ENCODE measurements at regions of chr17 and their contacts with region 1.

Region 1: GRCh38 chr17:55527540-55528118 is 16.4 kb upstream of the SMIM36 start:
- DNase-seq: peak; percentile 50 to 71
- ATAC-seq: peak; percentile 84 to 86
- H3K4me3 ChIP-seq: no peak overlapping the region
- H3K27ac ChIP-seq: no peak overlapping the region; a peak in 1 of 6 replicates
- H3K4me1 ChIP-seq: no peaks in the 10 kb centered on the region
- CTCF ChIP-seq: peak; percentile 96
- EP300 ChIP-seq: no peak
- POLR2A ChIP-seq: no peak
- RAD21 ChIP-seq: peak; percentile 94 to 99

Region 2: GRCh38 chr17:55540414-55541091 is 12.9 kb after region 1 on chr17:
- CTCF ChIA-PET with region 1: interaction called, 34 read pairs
- POLR2A ChIA-PET with region 1: no interaction called
- DNase-seq: peak; percentile 38 to 90
- ATAC-seq: peak; percentile 73 to 92; a peak in 5 of 6 replicates
- H3K4me3 ChIP-seq: no peak overlapping the region
- H3K27ac ChIP-seq: peak overlapping the region; percentile 59 to 74; a peak in 5 of 6 replicates
- H3K4me1 ChIP-seq: peaks cover 18% of the 10 kb centered on the region
- CTCF ChIP-seq: no peak
- EP300 ChIP-seq: peak; percentile 70 to 71; a peak in 3 of 5 replicates
- POLR2A ChIP-seq: no peak
- RAD21 ChIP-seq: peak in 1 of 2 experiments; percentile 32; a peak in 1 of 5 replicates

Region 3: DNA sequence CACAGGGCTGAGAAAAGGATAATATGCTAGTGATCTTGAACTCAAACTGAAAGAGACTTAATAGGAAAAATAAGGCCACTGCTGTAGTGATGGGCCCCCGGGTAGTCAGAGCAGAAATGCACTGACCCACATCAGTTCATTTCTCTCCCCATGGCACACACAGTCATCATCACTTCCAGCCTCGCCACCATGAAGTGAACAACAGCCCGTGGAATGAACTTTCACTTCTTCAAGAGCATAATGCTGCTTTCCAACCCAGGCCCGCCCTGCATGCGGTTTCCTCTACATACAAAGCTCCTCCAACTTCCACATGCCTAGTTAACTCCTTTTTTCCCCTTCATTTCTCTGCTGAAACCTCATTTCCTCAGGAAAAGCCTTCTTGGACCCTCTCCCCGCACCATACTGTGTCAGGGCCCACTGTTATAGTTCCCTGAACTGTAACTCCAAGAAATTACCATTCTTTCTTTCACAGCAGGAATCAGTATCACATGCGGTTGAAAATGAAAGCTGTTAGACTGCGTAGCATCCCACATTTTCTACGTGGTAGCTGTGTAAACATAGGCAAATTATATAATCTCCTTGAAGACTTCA is 49.5 kb after region 1 on chr17:
- CTCF ChIA-PET with region 1: interaction called, 22 read pairs
- POLR2A ChIA-PET with region 1: no interaction called
- DNase-seq: no peak
- ATAC-seq: peak; percentile 14 to 26; a peak in 3 of 6 replicates
- H3K4me3 ChIP-seq: no peak overlapping the region
- H3K27ac ChIP-seq: peak overlapping the region; percentile 14 to 44; a peak in 3 of 6 replicates
- H3K4me1 ChIP-seq: peaks cover 19% of the 10 kb centered on the region
- CTCF ChIP-seq: no peak
- EP300 ChIP-seq: no peak
- POLR2A ChIP-seq: no peak
- RAD21 ChIP-seq: no peak

Region 4: DNA sequence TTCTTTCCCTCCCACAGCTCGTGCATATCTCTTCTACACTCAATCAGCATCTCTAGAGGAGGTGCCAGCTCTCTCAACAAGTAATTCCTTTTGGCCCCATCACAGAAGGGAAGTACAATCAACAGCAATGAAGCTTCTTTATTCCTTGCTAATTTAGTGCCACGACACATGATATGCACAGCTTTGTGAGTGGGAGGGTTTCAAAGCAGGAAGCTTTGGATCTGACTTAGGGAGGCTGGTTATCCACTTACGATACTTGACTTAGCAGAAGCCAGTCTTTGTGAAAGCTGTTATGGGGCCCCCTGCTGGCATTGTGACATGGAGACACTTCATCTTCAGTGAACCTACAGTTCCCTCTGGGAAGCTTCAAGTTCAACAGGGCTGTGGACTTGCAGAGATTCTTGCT is 114.0 kb after region 1 on chr17:
- CTCF ChIA-PET with region 1: interaction called, 48 read pairs
- POLR2A ChIA-PET with region 1: no interaction called
- DNase-seq: peak; percentile 20 to 73
- ATAC-seq: peak; percentile 87 to 94
- H3K4me3 ChIP-seq: no peak overlapping the region
- H3K27ac ChIP-seq: no peak overlapping the region
- H3K4me1 ChIP-seq: no peaks in the 10 kb centered on the region
- CTCF ChIP-seq: peak; percentile 64
- EP300 ChIP-seq: no peak
- POLR2A ChIP-seq: no peak
- RAD21 ChIP-seq: peak; percentile 55 to 68

Region 5: GRCh38 chr17:55763851-55764250 is 236.2 kb after region 1 on chr17:
- CTCF ChIA-PET with region 1: interaction called, 296 read pairs
- POLR2A ChIA-PET with region 1: no interaction called
- DNase-seq: no peak
- ATAC-seq: no peak
- H3K4me3 ChIP-seq: no peak overlapping the region
- H3K27ac ChIP-seq: no peak overlapping the region
- H3K4me1 ChIP-seq: no peaks in the 10 kb centered on the region
- CTCF ChIP-seq: no peak
- EP300 ChIP-seq: no peak
- POLR2A ChIP-seq: no peak
- RAD21 ChIP-seq: no peak